Activated naive CD4-positive, alpha-beta T cell treated with anti-CD3 and anti-CD28 coated beads for 36 hours (primary cell): ENCODE measurements at regions of chr3 and their contacts with region 1.

Region 1: GRCh38 chr3:185659942-185660921 is 74.1 kb downstream of the SENP2 start:
- DNase-seq: peak; percentile 85
- H3K4me3 Mint-ChIP-seq: no peak overlapping the region
- H3K27ac Mint-ChIP-seq: no peak overlapping the region
- H3K4me1 Mint-ChIP-seq: no peaks in the 10 kb centered on the region
- H3K27me3 Mint-ChIP-seq: peaks cover 7% of the 10 kb centered on the region

Region 2: GRCh38 chr3:185328324-185329004 is 331.8 kb before region 1 on chr3:
- CTCF ChIA-PET with region 1: no interaction called
- intact Hi-C with region 1: no loop called
- DNase-seq: no peak
- H3K4me3 Mint-ChIP-seq: no peak overlapping the region
- H3K27ac Mint-ChIP-seq: no peak overlapping the region
- H3K4me1 Mint-ChIP-seq: peaks cover 4% of the 10 kb centered on the region
- H3K27me3 Mint-ChIP-seq: peaks cover 3% of the 10 kb centered on the region

Region 3: DNA sequence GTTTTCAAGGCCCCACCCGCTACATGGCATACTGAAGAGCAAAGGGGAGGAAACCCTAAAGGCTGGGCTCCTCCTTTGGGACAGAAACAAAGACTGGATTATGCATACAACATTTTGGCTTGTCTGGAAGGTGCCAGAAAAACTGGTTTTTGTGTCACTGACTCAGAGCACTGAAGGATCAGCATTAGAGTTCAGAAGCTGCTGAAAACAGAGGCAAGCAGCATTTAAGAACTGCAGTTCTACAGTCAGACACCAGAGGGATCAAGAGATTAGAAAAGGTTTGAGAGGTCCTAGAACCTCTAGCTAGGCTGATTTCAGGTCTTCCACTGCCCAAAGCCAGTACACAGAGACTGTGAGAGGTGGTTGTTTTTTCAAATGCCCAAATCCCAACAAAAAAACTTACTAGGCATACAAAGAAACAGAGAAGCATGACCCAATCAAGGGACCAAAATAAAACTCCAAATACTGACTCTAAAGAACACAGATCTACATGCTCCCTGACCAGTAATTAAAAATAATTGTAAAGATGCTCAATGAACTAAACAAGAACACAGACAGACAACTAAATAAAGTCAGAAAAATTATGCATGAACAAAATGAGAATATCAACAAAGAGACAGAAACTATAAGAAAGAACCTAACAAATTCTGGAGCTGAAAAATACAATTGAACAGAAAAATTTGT is 17.1 kb after region 1 on chr3:
- CTCF ChIA-PET with region 1: interaction called, 20 read pairs
- intact Hi-C with region 1: no loop called
- DNase-seq: no peak
- H3K4me3 Mint-ChIP-seq: no peak overlapping the region
- H3K27ac Mint-ChIP-seq: no peak overlapping the region
- H3K4me1 Mint-ChIP-seq: no peaks in the 10 kb centered on the region
- H3K27me3 Mint-ChIP-seq: peaks cover 14% of the 10 kb centered on the region

Region 4: GRCh38 chr3:185744997-185745843 is 85.0 kb after region 1 on chr3:
- CTCF ChIA-PET with region 1: interaction called, 11 read pairs
- intact Hi-C with region 1: no loop called
- DNase-seq: no peak
- H3K4me3 Mint-ChIP-seq: no peak overlapping the region
- H3K27ac Mint-ChIP-seq: no peak overlapping the region
- H3K4me1 Mint-ChIP-seq: no peaks in the 10 kb centered on the region
- H3K27me3 Mint-ChIP-seq: peaks cover 10% of the 10 kb centered on the region

Region 5: GRCh38 chr3:185770109-185770508 is 109.9 kb after region 1 on chr3:
- CTCF ChIA-PET with region 1: interaction called, 91 read pairs
- intact Hi-C with region 1: loop called (anchors 1 kb)
- DNase-seq: no peak
- H3K4me3 Mint-ChIP-seq: no peak overlapping the region
- H3K27ac Mint-ChIP-seq: no peak overlapping the region
- H3K4me1 Mint-ChIP-seq: peaks cover 6% of the 10 kb centered on the region
- H3K27me3 Mint-ChIP-seq: peaks cover 9% of the 10 kb centered on the region

Region 6: GRCh38 chr3:185942907-185943759 is 282.9 kb after region 1 on chr3:
- CTCF ChIA-PET with region 1: interaction called, 11 read pairs
- intact Hi-C with region 1: no loop called
- DNase-seq: peak; percentile 92
- H3K4me3 Mint-ChIP-seq: peak overlapping the region; percentile 28
- H3K27ac Mint-ChIP-seq: no peak overlapping the region
- H3K4me1 Mint-ChIP-seq: peaks cover 17% of the 10 kb centered on the region
- H3K27me3 Mint-ChIP-seq: no peaks in the 10 kb centered on the region

Region 7: DNA sequence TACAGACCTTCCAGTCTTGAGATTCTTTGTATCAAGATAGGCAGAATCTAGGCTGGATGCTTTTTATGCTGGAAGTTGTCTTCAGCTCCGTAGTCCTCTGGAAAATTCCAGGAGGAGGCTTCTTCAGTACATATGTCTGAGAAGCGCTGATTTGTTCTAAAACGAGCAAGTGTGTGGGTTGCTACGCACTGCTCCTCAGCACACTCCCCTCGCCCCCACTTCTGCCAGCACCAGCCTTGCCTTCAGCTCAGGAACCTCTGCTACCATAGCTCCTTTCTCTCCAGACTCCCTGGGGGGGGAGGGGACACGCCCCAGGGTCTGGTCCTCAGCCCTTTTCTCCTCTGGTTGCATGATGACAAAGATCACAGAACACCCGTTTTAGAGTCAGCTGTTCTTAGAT is 353.1 kb after region 1 on chr3:
- CTCF ChIA-PET with region 1: no interaction called
- intact Hi-C with region 1: no loop called
- DNase-seq: no peak
- H3K4me3 Mint-ChIP-seq: no peak overlapping the region
- H3K27ac Mint-ChIP-seq: no peak overlapping the region
- H3K4me1 Mint-ChIP-seq: no peaks in the 10 kb centered on the region
- H3K27me3 Mint-ChIP-seq: peaks cover 12% of the 10 kb centered on the region

Region 8: DNA sequence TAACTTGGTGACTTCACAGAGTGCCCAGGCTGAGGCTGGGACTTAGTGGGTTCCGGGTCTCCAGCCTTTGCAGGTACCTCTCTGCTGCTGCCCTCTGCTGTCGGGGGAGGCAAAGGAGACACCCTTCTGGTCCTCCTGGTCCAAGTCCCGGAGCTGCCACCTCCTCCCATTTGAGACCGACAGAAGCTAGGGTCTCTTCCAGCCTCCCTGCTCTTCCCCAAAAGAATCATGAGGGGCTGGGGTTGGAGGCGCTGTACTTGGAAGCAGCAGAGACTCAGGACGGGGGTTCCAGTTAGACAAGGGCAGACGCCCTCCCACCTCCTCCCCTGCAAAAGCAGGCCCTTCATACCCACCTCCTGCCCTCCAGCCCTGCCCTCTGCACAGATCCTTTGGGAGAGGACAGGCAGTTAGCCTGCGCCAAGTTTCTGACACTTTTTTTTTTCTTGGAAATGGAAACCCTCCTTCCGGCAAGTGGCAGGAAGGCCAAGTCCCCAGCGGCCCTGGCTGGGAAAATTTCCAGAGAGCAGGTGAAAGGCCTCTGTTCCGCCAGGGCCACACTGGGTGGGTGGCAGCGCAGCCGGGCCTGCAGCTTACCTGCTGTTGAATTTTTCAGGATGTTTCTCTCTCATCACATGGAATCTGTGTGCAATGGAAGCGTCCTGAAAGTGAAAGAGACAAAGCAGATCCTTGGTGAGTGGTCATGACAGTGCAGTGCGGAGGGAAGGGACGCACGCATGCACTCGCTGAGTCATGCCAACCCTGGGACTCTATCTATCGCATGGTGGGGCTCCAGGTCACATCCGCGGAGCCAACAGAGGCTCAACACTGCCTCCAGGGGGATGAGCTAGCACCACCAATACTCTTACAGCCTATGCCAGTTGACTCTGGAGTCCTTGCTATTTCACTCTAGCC is 581.9 kb after region 1 on chr3:
- CTCF ChIA-PET with region 1: no interaction called
- intact Hi-C with region 1: loop called (anchors 2 kb)
- DNase-seq: peak; percentile 87
- H3K4me3 Mint-ChIP-seq: peak overlapping the region; percentile 17
- H3K27ac Mint-ChIP-seq: no peak overlapping the region
- H3K4me1 Mint-ChIP-seq: peaks cover 7% of the 10 kb centered on the region
- H3K27me3 Mint-ChIP-seq: peaks cover 7% of the 10 kb centered on the region